ENCODE measurements at regions of chr5 and their contacts with region 1.

Region 1: GRCh38 chr5:168291464-168291961 is at the start of gene WWC1:
- DNase-seq: peak; percentile 84
- H3K4me3 ChIP-seq: peak within 1 kb of the TSS; percentile 60 to 67 (median 65)
- H3K27ac ChIP-seq: peak within 1 kb of the TSS; percentile 26
- H3K4me1 ChIP-seq: peaks cover 53% of the 10 kb centered on the region
- H3K27me3 ChIP-seq: no peaks in the 10 kb centered on the region
- CTCF ChIP-seq: peak in 1 of 2 donors; percentile 52
- total RNA-seq, gene WWC1: 17.8 to 32.0 TPM

Region 2: GRCh38 chr5:168227973-168228615 is 63.4 kb before region 1 on chr5:
- CTCF ChIA-PET with region 1: no interaction called
- dilution Hi-C with region 1: no loop called
- in situ Hi-C with region 1: no loop called
- intact Hi-C with region 1: no loop called
- DNase-seq: no peak
- H3K4me3 ChIP-seq: no peak overlapping the region
- H3K27ac ChIP-seq: no peak overlapping the region
- H3K4me1 ChIP-seq: no peaks in the 10 kb centered on the region
- H3K27me3 ChIP-seq: no peaks in the 10 kb centered on the region
- CTCF ChIP-seq: no peak

Region 3: GRCh38 chr5:168314735-168315418 is 23.4 kb after region 1 on chr5:
- CTCF ChIA-PET with region 1: no interaction called
- dilution Hi-C with region 1: no loop called
- in situ Hi-C with region 1: no loop called
- intact Hi-C with region 1: loop called (anchors 1 kb)
- DNase-seq: peak; percentile 93
- H3K4me3 ChIP-seq: peak overlapping the region in 1 of 3 experiments; percentile 1
- H3K27ac ChIP-seq: peak overlapping the region; percentile 61
- H3K4me1 ChIP-seq: peaks cover 36% of the 10 kb centered on the region
- H3K27me3 ChIP-seq: no peaks in the 10 kb centered on the region
- CTCF ChIP-seq: peak; percentile 11 to 37

Region 4: DNA sequence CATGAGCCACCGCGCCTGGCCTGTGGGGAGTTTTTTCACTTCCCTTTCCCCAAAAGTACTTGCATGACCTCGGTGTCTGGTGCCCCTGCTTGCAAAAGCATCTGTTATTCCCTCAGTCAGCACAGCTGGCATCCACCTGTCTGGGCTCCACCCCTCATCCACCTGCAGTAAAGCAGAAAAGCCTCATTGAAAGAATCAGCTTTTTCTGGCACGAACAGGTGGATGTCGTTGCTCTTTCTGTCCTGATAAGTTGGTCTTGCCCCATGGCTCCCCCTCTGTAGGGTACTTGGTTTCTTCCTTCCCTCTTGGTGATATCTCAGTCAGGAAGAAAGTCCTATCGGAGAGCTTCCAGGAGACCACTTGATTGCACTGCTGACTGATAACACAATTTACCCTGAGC is 37.3 kb after region 1 on chr5:
- CTCF ChIA-PET with region 1: interaction called, 8 read pairs
- dilution Hi-C with region 1: no loop called
- in situ Hi-C with region 1: no loop called
- intact Hi-C with region 1: loop called (anchors 5 kb)
- DNase-seq: no peak
- H3K4me3 ChIP-seq: no peak overlapping the region
- H3K27ac ChIP-seq: no peak overlapping the region
- H3K4me1 ChIP-seq: peaks cover 31% of the 10 kb centered on the region
- H3K27me3 ChIP-seq: no peaks in the 10 kb centered on the region
- CTCF ChIP-seq: no peak

Region 5: DNA sequence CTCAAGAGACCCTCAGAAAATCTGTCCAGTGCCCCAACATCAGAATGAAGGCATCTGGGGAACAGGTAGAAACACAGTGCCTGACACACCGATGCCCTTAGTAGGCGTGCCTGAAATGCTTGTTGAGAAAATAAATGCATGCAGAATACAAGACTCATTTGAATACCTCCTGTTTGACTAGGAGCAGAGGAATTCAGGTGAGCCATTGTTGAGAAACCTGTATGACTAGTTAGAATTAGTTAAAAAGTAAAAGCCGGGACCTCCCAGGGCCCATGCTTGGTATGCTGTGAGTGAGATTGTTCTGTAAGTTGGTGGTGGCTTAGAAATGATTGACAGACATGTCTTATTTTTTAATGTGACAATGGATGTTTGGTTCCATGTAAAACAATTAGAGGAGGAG is 54.9 kb after region 1 on chr5:
- CTCF ChIA-PET with region 1: no interaction called
- dilution Hi-C with region 1: no loop called
- in situ Hi-C with region 1: no loop called
- intact Hi-C with region 1: loop called (anchors 5 kb)
- DNase-seq: peak; percentile 81
- H3K4me3 ChIP-seq: no peak overlapping the region
- H3K27ac ChIP-seq: no peak overlapping the region
- H3K4me1 ChIP-seq: peaks cover 31% of the 10 kb centered on the region
- H3K27me3 ChIP-seq: no peaks in the 10 kb centered on the region
- CTCF ChIP-seq: no peak

Region 6: DNA sequence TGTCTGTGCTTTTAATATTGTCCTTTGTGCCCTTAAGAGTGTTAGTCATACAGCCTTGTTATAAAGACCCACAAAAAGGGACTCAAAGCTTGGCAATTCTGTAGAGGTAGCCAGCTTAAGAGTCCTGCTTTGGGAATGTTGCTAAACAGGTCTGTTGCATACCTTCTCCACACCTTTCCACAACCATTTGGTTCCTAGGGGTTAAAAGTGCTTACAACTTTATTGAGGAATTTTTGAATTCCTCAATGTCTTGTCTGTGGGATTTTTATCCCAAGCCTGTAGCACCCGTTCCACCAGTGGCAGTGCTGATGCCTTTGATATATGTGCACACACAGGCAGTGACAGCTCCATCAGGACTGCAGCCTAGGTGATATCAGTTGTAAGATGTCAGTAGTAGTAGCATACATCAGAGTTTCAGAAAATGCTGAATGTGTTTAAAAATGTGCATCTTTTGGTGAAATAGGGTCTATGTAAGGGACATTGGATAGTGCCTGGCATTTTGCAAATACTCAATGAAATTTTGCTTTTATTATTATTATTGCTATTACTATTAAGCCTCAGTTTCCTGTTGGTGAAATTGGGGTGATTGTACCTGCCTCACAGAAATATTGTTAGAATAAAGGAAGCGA is 68.4 kb after region 1 on chr5:
- CTCF ChIA-PET with region 1: no interaction called
- dilution Hi-C with region 1: no loop called
- in situ Hi-C with region 1: no loop called
- intact Hi-C with region 1: no loop called
- DNase-seq: peak; percentile 61
- H3K4me3 ChIP-seq: no peak overlapping the region
- H3K27ac ChIP-seq: no peak overlapping the region
- H3K4me1 ChIP-seq: peaks cover 33% of the 10 kb centered on the region
- H3K27me3 ChIP-seq: no peaks in the 10 kb centered on the region
- CTCF ChIP-seq: no peak

Region 7: GRCh38 chr5:168377525-168377924 is 86.0 kb after region 1 on chr5:
- CTCF ChIA-PET with region 1: no interaction called
- dilution Hi-C with region 1: no loop called
- in situ Hi-C with region 1: no loop called
- intact Hi-C with region 1: no loop called
- DNase-seq: no peak
- H3K4me3 ChIP-seq: no peak overlapping the region
- H3K27ac ChIP-seq: no peak overlapping the region
- H3K4me1 ChIP-seq: no peaks in the 10 kb centered on the region
- H3K27me3 ChIP-seq: no peaks in the 10 kb centered on the region
- CTCF ChIP-seq: no peak

Region 8: GRCh38 chr5:168409580-168410458 is 118.3 kb after region 1 on chr5:
- CTCF ChIA-PET with region 1: no interaction called
- dilution Hi-C with region 1: no loop called
- in situ Hi-C with region 1: no loop called
- intact Hi-C with region 1: loop called (anchors 2 kb)
- DNase-seq: peak; percentile 79
- H3K4me3 ChIP-seq: peak overlapping the region in 1 of 3 experiments; percentile 11
- H3K27ac ChIP-seq: peak overlapping the region; percentile 70
- H3K4me1 ChIP-seq: peaks cover 54% of the 10 kb centered on the region
- H3K27me3 ChIP-seq: no peaks in the 10 kb centered on the region
- CTCF ChIP-seq: no peak

Region 9: GRCh38 chr5:168422431-168422830 is 130.9 kb after region 1 on chr5:
- CTCF ChIA-PET with region 1: interaction called, 4 read pairs
- dilution Hi-C with region 1: no loop called
- in situ Hi-C with region 1: no loop called
- intact Hi-C with region 1: loop called (anchors 1 kb)
- DNase-seq: no peak
- H3K4me3 ChIP-seq: no peak overlapping the region
- H3K27ac ChIP-seq: no peak overlapping the region
- H3K4me1 ChIP-seq: no peaks in the 10 kb centered on the region
- H3K27me3 ChIP-seq: no peaks in the 10 kb centered on the region
- CTCF ChIP-seq: peak; percentile 22 to 56

Region 10: GRCh38 chr5:168654211-168654721 is 362.8 kb after region 1 on chr5:
- CTCF ChIA-PET with region 1: no interaction called
- dilution Hi-C with region 1: no loop called
- in situ Hi-C with region 1: no loop called
- intact Hi-C with region 1: no loop called
- DNase-seq: no peak
- H3K4me3 ChIP-seq: no peak overlapping the region
- H3K27ac ChIP-seq: no peak overlapping the region
- H3K4me1 ChIP-seq: peaks cover 56% of the 10 kb centered on the region
- H3K27me3 ChIP-seq: no peaks in the 10 kb centered on the region
- CTCF ChIP-seq: no peak

Measured in mammary epithelial cell (primary cell).